ENCODE measurements at regions of chr22 and their contacts with region 1.

Region 1: GRCh38 chr22:40177738-40178416 is at the start of gene TNRC6B:
- DNase-seq: peak; percentile 89
- ATAC-seq: peak; percentile 89
- H3K4me3 ChIP-seq: peak within 1 kb of the TSS; percentile 97
- H3K27ac ChIP-seq: peak within 1 kb of the TSS; percentile 87
- H3K4me1 ChIP-seq: peaks cover 37% of the 10 kb centered on the region
- H3K27me3 ChIP-seq: no peaks in the 10 kb centered on the region
- CTCF ChIP-seq: no peak
- total RNA-seq, gene TNRC6B: 15.1 and 21.3 TPM in 2 replicates

Region 2: GRCh38 chr22:40044102-40044869 is 133.6 kb before region 1 on chr22:
- CTCF ChIA-PET with region 1: no interaction called
- POLR2A ChIA-PET with region 1: interaction called, 6 read pairs
- intact Hi-C with region 1: loop called (anchors 10 kb)
- DNase-seq: peak; percentile 96
- ATAC-seq: peak; percentile 85
- H3K4me3 ChIP-seq: peak overlapping the region; percentile 72
- H3K27ac ChIP-seq: peak overlapping the region; percentile 61
- H3K4me1 ChIP-seq: peaks cover 24% of the 10 kb centered on the region
- H3K27me3 ChIP-seq: no peaks in the 10 kb centered on the region
- CTCF ChIP-seq: no peak

Region 3: DNA sequence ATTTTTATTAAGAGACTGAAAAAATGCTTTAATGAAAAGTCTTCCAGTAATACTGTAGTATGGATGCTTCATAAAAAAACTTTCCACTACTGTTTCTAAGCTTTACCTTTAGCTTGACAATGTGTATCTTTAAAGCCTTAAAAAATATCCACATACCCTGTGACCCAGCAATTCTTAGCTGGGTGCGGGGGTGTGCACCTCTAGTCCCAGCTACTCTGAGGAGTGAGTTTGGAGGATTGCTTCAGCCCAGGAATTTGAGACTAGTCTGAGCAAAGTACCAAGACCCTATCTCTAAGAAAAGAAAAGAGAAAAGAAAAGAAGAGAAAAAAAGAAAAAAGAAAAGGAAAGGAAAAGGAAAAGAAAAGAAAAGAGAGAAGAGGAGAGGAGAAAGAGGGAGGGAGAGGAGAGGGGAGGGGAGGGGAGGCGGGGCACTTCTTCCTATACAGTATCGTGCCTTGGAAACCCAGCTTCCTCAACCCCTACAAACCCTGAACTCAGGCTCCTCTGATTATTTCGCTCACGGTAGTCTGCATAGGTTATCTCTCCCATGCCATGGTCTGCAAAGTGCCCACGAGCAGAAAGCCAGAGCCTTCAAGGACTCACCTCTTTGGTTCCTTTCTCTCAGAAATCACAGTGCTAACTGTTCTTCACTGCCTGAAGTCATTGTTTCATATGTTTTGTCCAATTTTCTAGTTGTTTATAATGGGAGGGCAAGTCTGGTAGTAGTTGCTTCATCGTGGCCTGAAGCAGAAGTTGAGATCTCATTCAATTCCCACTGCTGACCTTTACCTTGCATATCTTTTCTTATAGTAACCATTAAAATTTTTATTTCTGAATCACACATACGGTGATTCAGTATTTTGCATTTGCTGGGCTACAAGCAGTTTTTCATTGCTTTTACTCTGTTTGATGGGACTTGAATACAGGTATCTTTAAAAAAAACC is 100.9 kb before region 1 on chr22:
- CTCF ChIA-PET with region 1: no interaction called
- POLR2A ChIA-PET with region 1: no interaction called
- intact Hi-C with region 1: loop called (anchors 5 kb)
- DNase-seq: peak; percentile 61
- ATAC-seq: peak; percentile 94
- H3K4me3 ChIP-seq: peak overlapping the region; percentile 47
- H3K27ac ChIP-seq: peak overlapping the region; percentile 74
- H3K4me1 ChIP-seq: peaks cover 20% of the 10 kb centered on the region
- H3K27me3 ChIP-seq: no peaks in the 10 kb centered on the region
- CTCF ChIP-seq: no peak

Region 4: DNA sequence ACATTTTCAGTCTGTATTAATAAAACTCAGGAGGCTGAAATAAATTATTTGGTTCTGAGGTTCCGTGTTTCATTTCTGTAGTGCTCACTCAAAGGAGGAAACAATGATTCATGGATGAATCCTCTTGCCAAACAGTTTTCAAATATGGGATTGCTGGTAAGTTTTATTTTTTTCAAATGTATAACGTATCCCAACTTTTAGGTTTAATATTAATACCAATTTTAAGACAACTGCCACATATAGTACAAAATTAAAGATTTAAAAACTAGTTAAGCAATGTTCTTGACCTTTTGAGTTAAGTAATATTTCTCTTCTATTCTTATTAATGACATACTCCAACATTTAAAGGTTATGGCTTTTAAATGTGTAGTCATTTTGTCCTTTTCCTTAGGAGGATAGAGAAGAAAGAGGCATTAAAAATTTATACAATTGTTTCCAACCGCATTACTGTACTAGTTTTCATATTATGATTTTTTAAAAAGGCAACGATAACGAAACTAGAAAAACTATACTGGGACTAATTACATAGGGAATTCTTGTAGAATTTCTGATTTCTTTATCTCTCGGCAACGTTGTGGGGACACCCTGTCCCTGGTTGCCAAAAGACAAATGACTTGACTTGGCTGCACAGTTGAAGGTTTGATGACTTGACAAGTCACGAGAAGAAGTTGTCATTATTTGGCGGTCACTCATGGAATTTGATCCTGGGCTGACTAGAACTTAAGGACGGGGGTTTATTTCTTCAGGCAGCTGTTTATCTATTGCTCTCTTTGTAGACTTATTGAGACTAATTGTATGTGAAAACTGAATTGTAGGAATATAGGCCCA is 99.3 kb after region 1 on chr22:
- CTCF ChIA-PET with region 1: no interaction called
- POLR2A ChIA-PET with region 1: no interaction called
- intact Hi-C with region 1: loop called (anchors 10 kb)
- DNase-seq: peak; percentile 37
- ATAC-seq: peak; percentile 59
- H3K4me3 ChIP-seq: peak overlapping the region; percentile 69
- H3K27ac ChIP-seq: peak overlapping the region; percentile 96
- H3K4me1 ChIP-seq: peaks cover 38% of the 10 kb centered on the region
- H3K27me3 ChIP-seq: no peaks in the 10 kb centered on the region
- CTCF ChIP-seq: no peak